MCF 10A (cell line): ENCODE measurements at regions of chr6 and their contacts with region 1.

Region 1: DNA sequence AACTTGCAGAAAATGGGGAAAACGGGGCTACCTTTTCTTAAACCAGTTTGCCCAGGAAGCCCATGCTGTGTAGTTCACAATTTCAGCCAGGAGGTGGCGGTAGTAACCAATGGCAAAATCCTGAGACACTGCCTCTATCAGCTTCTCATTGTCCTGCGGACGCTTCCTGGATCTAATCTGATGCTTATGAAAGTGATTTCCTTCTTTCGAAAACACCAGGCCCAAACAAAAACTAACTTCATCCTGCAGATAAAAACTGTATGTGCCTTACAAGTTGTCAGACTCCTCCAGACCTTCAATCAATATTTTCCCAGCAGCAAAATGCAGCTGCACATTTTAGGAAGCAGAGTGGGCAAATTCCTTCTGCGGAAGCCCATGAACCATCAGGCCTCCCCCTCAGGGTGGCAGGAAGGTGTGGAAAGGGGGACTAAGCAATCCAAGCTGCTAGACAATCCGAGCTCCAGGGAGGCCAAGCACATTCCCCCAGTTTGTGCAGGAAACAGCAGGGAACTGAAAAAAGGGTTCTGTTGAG is 88.5 kb downstream of the LY86 start:
- DNase-seq: peak; percentile 88
- H3K4me3 Mint-ChIP-seq: no peak overlapping the region
- H3K27ac Mint-ChIP-seq: no peak overlapping the region
- H3K4me1 Mint-ChIP-seq: peaks cover 23% of the 10 kb centered on the region
- H3K27me3 Mint-ChIP-seq: no peaks in the 10 kb centered on the region
- CTCF ChIP-seq: peak; percentile 92

Region 2: DNA sequence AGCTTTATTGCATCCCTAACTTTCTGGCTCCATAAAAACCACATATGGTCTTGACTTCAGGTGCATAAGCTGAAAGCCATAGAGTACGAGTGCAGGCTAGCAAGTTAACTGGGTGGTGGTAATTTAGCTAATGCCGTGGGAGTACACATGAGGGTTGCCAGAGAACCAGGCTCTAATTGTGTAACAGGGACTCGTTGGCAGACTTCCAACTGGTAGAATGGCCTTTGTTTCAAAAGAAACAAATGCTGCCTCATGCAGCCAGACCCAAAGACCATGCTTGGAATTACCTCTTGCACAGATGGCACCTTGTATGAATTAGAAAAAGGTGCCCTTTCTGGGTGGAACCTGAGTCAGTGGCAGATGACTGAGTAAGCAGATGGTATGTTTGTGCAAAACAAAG is 15.3 kb before region 1 on chr6:
- CTCF ChIA-PET with region 1: interaction called, 15 read pairs
- POLR2A ChIA-PET with region 1: interaction called, 6 read pairs
- intact Hi-C with region 1: no loop called
- DNase-seq: peak; percentile 91
- H3K4me3 Mint-ChIP-seq: no peak overlapping the region
- H3K27ac Mint-ChIP-seq: no peak overlapping the region
- H3K4me1 Mint-ChIP-seq: peaks cover 14% of the 10 kb centered on the region
- H3K27me3 Mint-ChIP-seq: no peaks in the 10 kb centered on the region
- CTCF ChIP-seq: no peak

Region 3: DNA sequence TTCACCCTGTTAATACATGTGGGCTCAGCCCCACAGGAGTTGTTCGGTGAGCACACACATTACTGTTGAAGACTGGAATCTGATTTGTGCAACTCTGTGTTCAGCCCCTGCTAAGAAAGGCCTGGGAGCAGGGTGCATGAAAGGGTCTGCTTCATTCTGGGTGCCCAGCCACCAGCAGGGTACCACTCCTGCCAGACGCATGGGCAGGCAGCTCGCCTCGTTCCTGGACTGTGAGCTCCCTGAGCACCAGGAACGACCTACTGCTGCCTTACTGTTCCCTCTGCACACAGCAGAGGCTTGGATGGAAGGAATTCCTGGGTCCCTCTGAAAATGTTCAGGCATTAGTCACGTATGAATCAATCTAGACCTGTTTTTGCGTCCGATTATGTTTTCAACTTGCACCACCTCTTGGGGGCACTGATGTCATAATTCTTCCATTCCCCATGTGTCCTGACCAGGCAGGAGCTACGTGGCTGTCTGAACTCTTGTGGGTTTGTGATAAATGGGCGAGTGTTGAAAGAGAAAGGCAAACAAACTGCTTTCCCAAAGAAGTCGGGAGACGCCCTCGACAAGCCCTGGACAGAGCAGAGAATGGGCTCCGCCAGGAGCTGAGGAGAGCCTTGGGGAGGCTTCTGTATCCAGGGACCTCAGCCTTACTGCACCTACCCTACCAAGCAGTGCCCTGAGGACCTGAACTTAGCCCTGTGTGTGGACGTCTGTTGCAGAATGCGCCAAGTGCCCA is 35.5 kb after region 1 on chr6:
- CTCF ChIA-PET with region 1: interaction called, 15 read pairs
- POLR2A ChIA-PET with region 1: interaction called, 11 read pairs
- intact Hi-C with region 1: loop called (anchors 1 kb)
- DNase-seq: peak; percentile 96
- H3K4me3 Mint-ChIP-seq: peak overlapping the region; percentile 36
- H3K27ac Mint-ChIP-seq: peak overlapping the region; percentile 73
- H3K4me1 Mint-ChIP-seq: peaks cover 16% of the 10 kb centered on the region
- H3K27me3 Mint-ChIP-seq: no peaks in the 10 kb centered on the region
- CTCF ChIP-seq: no peak

Region 4: DNA sequence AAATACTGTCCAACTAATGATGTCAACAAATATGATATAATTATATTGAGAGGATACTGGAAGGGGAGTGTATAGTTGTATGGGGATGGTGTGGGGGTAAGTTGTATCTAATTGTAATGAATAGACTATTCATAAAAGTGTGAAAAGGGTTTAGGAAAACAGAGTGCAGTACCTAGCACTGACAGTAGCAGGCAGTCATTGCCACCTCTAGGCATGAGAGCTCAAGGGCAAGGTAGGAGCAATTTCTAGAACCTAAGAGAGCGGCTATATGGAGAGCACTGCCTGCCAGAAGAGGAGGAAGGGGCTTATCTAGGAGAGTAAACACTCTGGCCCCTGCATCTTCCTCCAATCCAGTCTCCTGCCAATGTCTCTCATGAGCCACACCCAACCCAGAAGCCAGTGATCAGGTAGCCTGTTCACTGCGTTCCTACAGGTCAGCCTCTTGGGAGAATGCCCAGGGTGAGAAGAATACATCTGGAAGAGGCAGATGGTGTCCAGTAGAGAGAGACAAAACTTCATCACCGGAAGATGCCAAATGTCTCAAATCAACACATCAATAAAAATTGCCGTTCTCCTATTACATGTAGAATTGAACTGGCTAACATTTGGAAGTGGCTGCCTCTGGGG is 111.5 kb after region 1 on chr6:
- CTCF ChIA-PET with region 1: interaction called, 4 read pairs
- POLR2A ChIA-PET with region 1: interaction called, 4 read pairs
- intact Hi-C with region 1: loop called (anchors 2 kb)
- DNase-seq: peak; percentile 54
- H3K4me3 Mint-ChIP-seq: no peak overlapping the region
- H3K27ac Mint-ChIP-seq: peak overlapping the region; percentile 33
- H3K4me1 Mint-ChIP-seq: peaks cover 43% of the 10 kb centered on the region
- H3K27me3 Mint-ChIP-seq: no peaks in the 10 kb centered on the region
- CTCF ChIP-seq: peak; percentile 38

Region 5: DNA sequence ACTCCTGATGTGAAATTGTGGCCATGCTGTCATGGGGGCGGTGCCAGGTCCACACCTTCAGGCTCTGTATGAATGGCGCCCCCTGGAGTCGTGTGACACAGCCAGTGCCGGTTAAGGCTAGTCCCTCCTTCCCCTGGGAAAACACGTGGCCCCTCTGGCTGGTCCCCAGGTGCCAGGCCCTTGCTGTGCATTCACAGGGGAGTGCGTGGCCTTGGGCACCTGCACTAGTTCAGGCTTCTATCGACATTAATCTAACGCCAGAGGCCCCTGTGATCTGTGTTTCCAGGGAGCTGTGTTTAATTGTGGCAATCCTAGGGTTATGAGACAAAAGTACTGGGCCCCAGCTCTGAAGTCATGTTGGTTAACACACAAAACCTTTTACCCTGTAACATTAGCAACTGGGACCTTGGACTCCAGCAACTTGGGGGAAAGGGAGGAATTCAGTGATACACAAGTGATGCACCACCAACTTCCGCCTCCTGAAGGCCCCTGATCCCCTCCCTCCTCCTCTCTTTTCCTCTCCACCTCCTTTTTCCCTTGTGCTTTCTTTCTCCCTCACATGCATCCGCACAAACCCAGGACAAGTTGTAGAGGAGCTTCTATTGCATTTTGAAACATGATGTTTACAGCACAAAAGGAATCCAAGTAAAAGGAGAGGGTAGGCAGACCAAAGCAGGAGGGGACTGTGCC is 562.1 kb after region 1 on chr6:
- CTCF ChIA-PET with region 1: interaction called, 8 read pairs
- POLR2A ChIA-PET with region 1: interaction called, 3 read pairs
- intact Hi-C with region 1: loop called (anchors 1 kb)
- DNase-seq: peak; percentile 85
- H3K4me3 Mint-ChIP-seq: no peak overlapping the region
- H3K27ac Mint-ChIP-seq: peak overlapping the region; percentile 41
- H3K4me1 Mint-ChIP-seq: peaks cover 30% of the 10 kb centered on the region
- H3K27me3 Mint-ChIP-seq: no peaks in the 10 kb centered on the region
- CTCF ChIP-seq: peak; percentile 45